T-cell (primary cell): ENCODE measurements at regions of chr6 and their contacts with region 1.

Region 1: DNA sequence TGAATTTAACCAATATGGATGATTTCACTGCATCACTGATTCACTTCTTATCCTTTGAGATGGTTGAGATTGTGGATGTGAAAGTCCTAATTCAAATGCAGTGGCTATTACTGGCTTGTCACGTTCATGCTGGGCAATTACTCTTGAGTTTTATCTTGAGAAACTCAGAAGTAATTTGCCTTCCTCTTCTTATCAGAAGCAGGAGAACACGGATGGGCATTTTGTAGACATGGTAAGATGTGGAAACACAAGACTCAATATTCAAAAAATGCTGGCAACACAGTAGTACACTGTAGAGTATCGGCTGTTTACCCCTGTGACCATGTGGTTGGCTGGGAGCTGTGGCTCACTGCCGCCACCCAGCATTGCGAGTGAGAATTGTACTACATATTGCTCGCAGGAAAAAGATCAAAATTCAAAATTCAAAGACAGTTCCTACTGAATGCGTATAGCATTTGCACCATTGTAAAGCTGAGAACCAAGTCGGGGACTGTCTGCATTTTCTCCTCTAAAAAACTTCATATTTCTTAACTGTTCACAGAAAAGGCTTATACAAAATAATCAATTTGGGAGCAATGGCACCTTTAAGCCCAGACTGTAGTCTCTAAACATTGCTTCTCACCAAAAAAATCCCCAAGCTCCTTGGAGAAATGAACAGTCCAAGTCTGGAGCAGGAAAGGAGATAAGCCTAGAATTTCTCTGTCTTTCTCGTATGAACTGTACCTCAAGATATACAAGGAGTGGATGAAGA is 61.9 kb upstream of the ELOVL5 start:
- DNase-seq: peak; percentile 33 to 77 (median 57)
- ATAC-seq: peak; percentile 89 to 100 (median 96)
- H3K4me3 ChIP-seq: no peak overlapping the region
- H3K4me3 Mint-ChIP-seq: no peak overlapping the region
- H3K27ac ChIP-seq: no peak overlapping the region
- H3K27ac Mint-ChIP-seq: no peak overlapping the region
- H3K4me1 ChIP-seq: no peaks in the 10 kb centered on the region
- H3K4me1 Mint-ChIP-seq: peaks cover 5% of the 10 kb centered on the region in 3 donors
- H3K27me3 ChIP-seq: no peaks in the 10 kb centered on the region
- H3K27me3 Mint-ChIP-seq: peaks cover 0 to 3% of the 10 kb centered on the region in 2 donors

Region 2: GRCh38 chr6:53171605-53172446 is 238.9 kb before region 1 on chr6:
- CTCF ChIA-PET with region 1: interaction called, 28 to 32 read pairs
- POLR2A ChIA-PET with region 1: interaction called in 1 of 2 experiments, 5 read pairs
- DNase-seq: peak; percentile 69 to 94 (median 88)
- ATAC-seq: peak; percentile 88 to 99 (median 96)
- H3K4me3 ChIP-seq: no peak overlapping the region
- H3K4me3 Mint-ChIP-seq: no peak overlapping the region
- H3K27ac ChIP-seq: no peak overlapping the region
- H3K27ac Mint-ChIP-seq: no peak overlapping the region
- H3K4me1 ChIP-seq: no peaks in the 10 kb centered on the region
- H3K4me1 Mint-ChIP-seq: peaks cover 0 to 9% (median 0%) of the 10 kb centered on the region in 3 donors
- H3K27me3 ChIP-seq: no peaks in the 10 kb centered on the region
- H3K27me3 Mint-ChIP-seq: no peaks in the 10 kb centered on the region

Region 3: GRCh38 chr6:53290537-53291510 is 119.9 kb before region 1 on chr6:
- CTCF ChIA-PET with region 1: interaction called, 4 to 10 read pairs
- POLR2A ChIA-PET with region 1: no interaction called
- DNase-seq: peak in 24 of 35 experiments; percentile 11 to 71 (median 26)
- ATAC-seq: peak; percentile 86 to 95 (median 91)
- H3K4me3 ChIP-seq: no peak overlapping the region
- H3K4me3 Mint-ChIP-seq: peak overlapping the region; percentile 14 to 53 (median 15)
- H3K27ac ChIP-seq: peak overlapping the region; percentile 72
- H3K27ac Mint-ChIP-seq: peak overlapping the region; percentile 90 to 92
- H3K4me1 ChIP-seq: peaks cover 44 to 54% of the 10 kb centered on the region in 2 experiments
- H3K4me1 Mint-ChIP-seq: peaks cover 77 to 90% (median 79%) of the 10 kb centered on the region in 3 donors
- H3K27me3 ChIP-seq: no peaks in the 10 kb centered on the region
- H3K27me3 Mint-ChIP-seq: no peaks in the 10 kb centered on the region

Region 4: GRCh38 chr6:53300656-53301551 is 109.8 kb before region 1 on chr6:
- CTCF ChIA-PET with region 1: interaction called, 3 to 12 read pairs
- POLR2A ChIA-PET with region 1: no interaction called
- DNase-seq: peak in 30 of 35 experiments; percentile 5 to 60 (median 25)
- ATAC-seq: peak in 1 of 4 experiments; percentile 57
- H3K4me3 ChIP-seq: no peak overlapping the region
- H3K4me3 Mint-ChIP-seq: peak overlapping the region; percentile 21 to 75 (median 25)
- H3K27ac ChIP-seq: peak overlapping the region; percentile 35
- H3K27ac Mint-ChIP-seq: peak overlapping the region; percentile 79 to 83
- H3K4me1 ChIP-seq: peaks cover 37 to 40% of the 10 kb centered on the region in 2 experiments
- H3K4me1 Mint-ChIP-seq: peaks cover 80 to 85% (median 81%) of the 10 kb centered on the region in 3 donors
- H3K27me3 ChIP-seq: no peaks in the 10 kb centered on the region
- H3K27me3 Mint-ChIP-seq: no peaks in the 10 kb centered on the region

Region 5: GRCh38 chr6:53603386-53604116 is 192.9 kb after region 1 on chr6:
- CTCF ChIA-PET with region 1: no interaction called
- POLR2A ChIA-PET with region 1: interaction called in 1 of 2 experiments, 14 read pairs
- DNase-seq: no peak
- ATAC-seq: no peak
- H3K4me3 ChIP-seq: no peak overlapping the region
- H3K4me3 Mint-ChIP-seq: no peak overlapping the region
- H3K27ac ChIP-seq: no peak overlapping the region
- H3K27ac Mint-ChIP-seq: no peak overlapping the region
- H3K4me1 ChIP-seq: no peaks in the 10 kb centered on the region
- H3K4me1 Mint-ChIP-seq: no peaks in the 10 kb centered on the region
- H3K27me3 ChIP-seq: peaks cover 0 to 5% of the 10 kb centered on the region in 2 experiments
- H3K27me3 Mint-ChIP-seq: peaks cover 3 to 4% of the 10 kb centered on the region in 2 donors